Heart left ventricle (tissue), 16 donors: ENCODE measurements at regions of chr2 and their contacts with region 1.

Region 1: GRCh38 chr2:163345908-163346573 is 389.8 kb downstream of the FIGN start:
- DNase-seq: peak in 1 of 5 donors; percentile 10
- ATAC-seq: no peak
- H3K4me3 ChIP-seq: no peak overlapping the region
- H3K27ac ChIP-seq: no peak overlapping the region
- H3K4me1 ChIP-seq: peaks cover 0 to 17% (median 6%) of the 10 kb centered on the region in 12 donors
- H3K27me3 ChIP-seq: no peaks in the 10 kb centered on the region
- CTCF ChIP-seq: peak; percentile 64 to 91 (median 82)
- POLR2A ChIP-seq: no peak

Region 2: GRCh38 chr2:163291790-163292189 is 54.3 kb before region 1 on chr2:
- intact Hi-C with region 1: no loop called
- DNase-seq: no peak
- ATAC-seq: no peak
- H3K4me3 ChIP-seq: no peak overlapping the region
- H3K27ac ChIP-seq: no peak overlapping the region
- H3K4me1 ChIP-seq: no peaks in the 10 kb centered on the region
- H3K27me3 ChIP-seq: no peaks in the 10 kb centered on the region
- CTCF ChIP-seq: no peak
- POLR2A ChIP-seq: no peak

Region 3: DNA sequence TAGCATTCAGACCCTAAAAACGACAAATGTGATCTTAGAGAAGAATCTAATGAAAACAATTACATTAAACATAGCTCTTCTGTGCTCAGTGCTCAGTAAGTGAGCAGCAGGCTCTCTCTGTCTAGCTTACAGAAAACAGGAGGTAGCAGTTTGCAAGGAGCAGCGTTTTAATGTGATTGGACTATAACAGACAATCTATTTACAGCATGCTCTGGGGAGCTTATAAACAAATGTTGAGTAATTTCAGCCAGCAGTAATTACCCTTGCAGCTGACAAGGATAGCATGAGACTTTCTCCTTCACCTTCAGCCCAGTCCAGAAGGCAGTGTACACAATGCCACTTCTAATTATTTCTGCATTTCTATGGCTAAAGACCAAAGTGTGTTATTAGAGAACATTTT is 119.4 kb after region 1 on chr2:
- intact Hi-C with region 1: loop called in 3 of 10 experiments (anchors 2 to 10 kb)
- DNase-seq: no peak
- ATAC-seq: peak in 3 of 4 donors; percentile 62 to 72 (median 67)
- H3K4me3 ChIP-seq: no peak overlapping the region
- H3K27ac ChIP-seq: no peak overlapping the region
- H3K4me1 ChIP-seq: peaks cover 0 to 25% (median 2%) of the 10 kb centered on the region in 12 donors
- H3K27me3 ChIP-seq: no peaks in the 10 kb centered on the region
- CTCF ChIP-seq: no peak
- POLR2A ChIP-seq: no peak

Region 4: DNA sequence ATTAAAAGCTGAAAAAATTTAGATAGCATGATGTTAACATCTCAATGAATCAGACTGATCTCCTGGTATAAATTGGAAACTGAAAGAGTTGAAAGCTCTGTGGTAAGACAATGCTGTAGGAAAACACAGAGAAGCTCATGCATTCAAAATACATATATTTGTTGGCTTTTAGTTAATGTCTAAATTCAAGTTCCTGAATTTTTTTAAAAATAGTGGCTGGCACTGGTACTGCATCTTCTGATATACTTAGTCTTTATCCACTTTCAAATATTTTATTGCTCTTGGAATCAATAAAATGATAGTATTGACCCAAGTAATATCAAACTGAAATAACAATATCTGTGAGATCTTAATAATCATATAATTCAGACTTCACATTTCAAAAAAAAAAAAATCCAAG is 541.1 kb after region 1 on chr2:
- intact Hi-C with region 1: loop called in 1 of 10 experiments (anchors 10 kb)
- DNase-seq: no peak
- ATAC-seq: no peak
- H3K4me3 ChIP-seq: no peak overlapping the region
- H3K27ac ChIP-seq: no peak overlapping the region
- H3K4me1 ChIP-seq: no peaks in the 10 kb centered on the region
- H3K27me3 ChIP-seq: no peaks in the 10 kb centered on the region
- CTCF ChIP-seq: peak in 4 of 12 donors; percentile 10 to 63 (median 48)
- POLR2A ChIP-seq: no peak

Region 5: GRCh38 chr2:164420786-164421185 is 1074.7 kb after region 1 on chr2:
- intact Hi-C with region 1: loop called in 5 of 10 experiments (anchors 5 to 10 kb)
- DNase-seq: no peak
- ATAC-seq: no peak
- H3K4me3 ChIP-seq: no peak overlapping the region
- H3K27ac ChIP-seq: no peak overlapping the region
- H3K4me1 ChIP-seq: no peaks in the 10 kb centered on the region
- H3K27me3 ChIP-seq: no peaks in the 10 kb centered on the region
- CTCF ChIP-seq: no peak
- POLR2A ChIP-seq: no peak

Region 6: DNA sequence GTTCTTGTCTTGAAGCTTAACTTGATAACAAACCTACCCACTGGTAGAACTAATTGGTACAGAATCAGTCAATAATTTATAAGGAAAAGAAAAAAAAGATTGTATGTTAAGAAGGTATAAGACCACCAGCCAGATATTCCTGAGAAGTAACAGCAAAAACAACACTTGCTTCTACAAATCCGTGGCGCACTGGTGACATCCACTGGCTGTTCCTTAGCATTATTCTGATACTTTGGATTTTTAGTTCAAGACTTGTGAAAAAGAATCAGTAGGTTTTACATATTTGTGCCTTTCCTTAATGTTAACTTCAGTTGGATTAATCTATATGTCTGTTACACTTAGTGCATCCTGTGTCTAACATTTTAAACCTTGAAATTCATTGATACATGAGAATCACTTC is 1133.4 kb after region 1 on chr2:
- intact Hi-C with region 1: loop called in 1 of 10 experiments (anchors 10 kb)
- DNase-seq: peak in 1 of 5 donors; percentile 15
- ATAC-seq: no peak
- H3K4me3 ChIP-seq: no peak overlapping the region
- H3K27ac ChIP-seq: no peak overlapping the region
- H3K4me1 ChIP-seq: no peaks in the 10 kb centered on the region
- H3K27me3 ChIP-seq: no peaks in the 10 kb centered on the region
- CTCF ChIP-seq: peak; percentile 15 to 59 (median 47)
- POLR2A ChIP-seq: no peak